ENCODE measurements at regions of chr6 and their contacts with region 1.

Region 1: GRCh38 chr6:110389689-110390382 is 25.5 kb downstream of the DDO start:
- DNase-seq: no peak
- ATAC-seq: no peak
- H3K4me3 ChIP-seq: no peak overlapping the region
- H3K27ac ChIP-seq: no peak overlapping the region
- H3K4me1 ChIP-seq: no peaks in the 10 kb centered on the region
- H3K27me3 ChIP-seq: no peaks in the 10 kb centered on the region
- CTCF ChIP-seq: no peak

Region 2: GRCh38 chr6:109991201-109992101 is 398.4 kb before region 1 on chr6:
- intact Hi-C with region 1: no loop called
- DNase-seq: no peak
- ATAC-seq: no peak
- H3K4me3 ChIP-seq: no peak overlapping the region
- H3K27ac ChIP-seq: no peak overlapping the region
- H3K4me1 ChIP-seq: no peaks in the 10 kb centered on the region
- H3K27me3 ChIP-seq: peaks cover 0 to 3% (median 0%) of the 10 kb centered on the region in 3 donors
- CTCF ChIP-seq: no peak

Region 3: GRCh38 chr6:110053395-110054240 is 336.2 kb before region 1 on chr6:
- intact Hi-C with region 1: loop called in 1 of 2 experiments (anchors 5 kb)
- DNase-seq: no peak
- ATAC-seq: no peak
- H3K4me3 ChIP-seq: no peak overlapping the region
- H3K27ac ChIP-seq: no peak overlapping the region
- H3K4me1 ChIP-seq: no peaks in the 10 kb centered on the region
- H3K27me3 ChIP-seq: no peaks in the 10 kb centered on the region
- CTCF ChIP-seq: peak; percentile 55

Region 4: GRCh38 chr6:110179401-110180227 is 210.2 kb before region 1 on chr6 and contains the start of gene WASF1:
- intact Hi-C with region 1: loop called in 1 of 2 experiments (anchors 2 kb)
- DNase-seq: peak; percentile 94 to 95
- ATAC-seq: peak; percentile 99 to 100 (median 100)
- H3K4me3 ChIP-seq: peak within 1 kb of the TSS; percentile 75
- H3K27ac ChIP-seq: peak within 1 kb of the TSS; percentile 89
- H3K4me1 ChIP-seq: peaks cover 32% of the 10 kb centered on the region
- H3K27me3 ChIP-seq: peaks cover 0 to 21% (median 0%) of the 10 kb centered on the region in 3 donors
- CTCF ChIP-seq: no peak
- total RNA-seq, gene WASF1: 0.47 to 1.1 (median 0.81) TPM

Measured in psoas muscle (tissue), 8 donors.